ENCODE measurements at regions of chr4 and their contacts with region 1.

Region 1: DNA sequence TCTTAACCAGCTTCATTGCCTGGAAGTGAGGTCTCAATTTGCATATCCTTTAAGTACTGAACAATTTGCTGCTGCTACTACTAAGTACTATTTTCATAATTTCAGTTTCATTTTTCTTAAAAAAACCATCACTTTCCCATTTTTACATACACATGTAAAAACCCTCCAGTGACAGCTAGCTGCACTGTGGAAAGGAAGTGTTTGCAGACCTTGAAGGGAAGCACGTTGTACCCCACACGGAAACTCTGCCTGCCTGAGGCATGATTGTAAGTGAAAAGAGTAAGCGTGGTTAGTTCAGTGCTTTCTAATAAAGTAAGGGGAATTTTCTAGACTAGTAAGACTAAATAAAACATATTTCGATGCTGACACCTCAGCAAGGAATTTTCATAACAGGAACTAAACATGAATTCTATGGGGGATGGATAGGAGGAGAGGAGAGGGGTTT is 103.6 kb downstream of the RAPGEF2 start:
- DNase-seq: peak; percentile 84
- H3K4me3 Mint-ChIP-seq: peak overlapping the region; percentile 44
- H3K27ac Mint-ChIP-seq: peak overlapping the region; percentile 97
- H3K4me1 Mint-ChIP-seq: peaks cover 54% of the 10 kb centered on the region
- H3K27me3 Mint-ChIP-seq: no peaks in the 10 kb centered on the region

Region 2: DNA sequence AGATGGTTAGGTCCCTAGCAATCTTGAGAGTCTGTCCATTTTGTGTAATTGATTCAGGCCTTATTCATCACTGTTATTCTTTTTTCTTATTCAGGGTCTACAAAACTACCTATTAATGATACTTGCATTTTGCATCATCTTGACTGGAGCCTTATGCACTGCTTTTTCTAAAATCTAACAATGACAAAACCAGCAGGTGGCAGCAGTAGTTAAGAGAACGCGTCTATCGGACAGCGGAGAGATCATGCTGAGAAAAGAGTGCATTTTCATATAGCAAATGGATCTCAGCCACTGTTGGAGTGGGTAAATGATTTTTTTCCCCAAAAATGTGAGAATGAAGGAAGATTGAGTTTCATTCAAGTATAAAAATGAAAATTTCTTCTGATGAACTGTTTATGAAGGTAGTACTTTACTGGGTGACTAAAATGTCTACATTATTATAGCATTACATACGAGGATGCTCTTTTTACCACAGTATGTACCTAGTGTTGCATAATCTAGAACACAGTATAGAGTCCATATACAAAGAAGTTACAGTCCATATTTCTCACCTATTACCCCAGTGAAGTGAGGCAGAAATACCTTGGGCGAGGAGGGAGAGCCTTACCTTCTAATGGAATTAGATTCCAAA is 953.0 kb before region 1 on chr4:
- CTCF ChIA-PET with region 1: no interaction called
- intact Hi-C with region 1: loop called (anchors 2 kb)
- DNase-seq: peak; percentile 76
- H3K4me3 Mint-ChIP-seq: no peak overlapping the region
- H3K27ac Mint-ChIP-seq: no peak overlapping the region
- H3K4me1 Mint-ChIP-seq: peaks cover 7% of the 10 kb centered on the region
- H3K27me3 Mint-ChIP-seq: peaks cover 18% of the 10 kb centered on the region

Region 3: GRCh38 chr4:158722917-158723793 is 483.3 kb before region 1 on chr4 and contains the start of gene PPID:
- CTCF ChIA-PET with region 1: interaction called, 11 read pairs
- intact Hi-C with region 1: loop called (anchors 1 kb)
- DNase-seq: peak; percentile 88
- H3K4me3 Mint-ChIP-seq: peak within 1 kb of the TSS; percentile 98
- H3K27ac Mint-ChIP-seq: peak within 1 kb of the TSS; percentile 99
- H3K4me1 Mint-ChIP-seq: peaks cover 41% of the 10 kb centered on the region
- H3K27me3 Mint-ChIP-seq: no peaks in the 10 kb centered on the region
- total RNA-seq, gene PPID: 55.4 to 55.6 TPM

Region 4: DNA sequence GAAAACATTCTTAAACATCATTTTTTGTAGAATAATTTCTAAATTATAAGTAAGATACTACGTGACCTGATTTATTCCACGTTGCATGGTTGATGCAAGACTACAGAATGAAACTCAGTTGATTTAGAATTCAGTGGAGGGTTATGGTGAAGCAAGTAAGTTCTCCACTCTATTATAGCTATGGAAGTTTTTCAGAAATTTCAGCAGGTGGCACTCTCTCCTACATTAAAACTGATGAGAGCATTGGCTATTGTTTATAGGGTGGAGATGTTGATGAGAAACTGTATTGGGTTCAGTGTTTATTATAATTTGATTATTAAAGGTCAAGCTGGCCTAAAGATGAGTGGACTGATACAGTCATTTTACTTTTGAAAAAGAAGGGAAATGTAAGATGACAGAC is 349.6 kb before region 1 on chr4:
- CTCF ChIA-PET with region 1: interaction called, 26 read pairs
- intact Hi-C with region 1: loop called (anchors 1 kb)
- DNase-seq: no peak
- H3K4me3 Mint-ChIP-seq: no peak overlapping the region
- H3K27ac Mint-ChIP-seq: no peak overlapping the region
- H3K4me1 Mint-ChIP-seq: no peaks in the 10 kb centered on the region
- H3K27me3 Mint-ChIP-seq: no peaks in the 10 kb centered on the region

Region 5: GRCh38 chr4:159169404-159170302 is 36.8 kb before region 1 on chr4:
- CTCF ChIA-PET with region 1: interaction called, 11 read pairs
- intact Hi-C with region 1: no loop called
- DNase-seq: no peak
- H3K4me3 Mint-ChIP-seq: no peak overlapping the region
- H3K27ac Mint-ChIP-seq: no peak overlapping the region
- H3K4me1 Mint-ChIP-seq: peaks cover 68% of the 10 kb centered on the region
- H3K27me3 Mint-ChIP-seq: no peaks in the 10 kb centered on the region

Region 6: GRCh38 chr4:159232465-159233106 is 26.1 kb after region 1 on chr4:
- CTCF ChIA-PET with region 1: interaction called, 8 read pairs
- intact Hi-C with region 1: loop called (anchors 1 kb)
- DNase-seq: no peak
- H3K4me3 Mint-ChIP-seq: no peak overlapping the region
- H3K27ac Mint-ChIP-seq: no peak overlapping the region
- H3K4me1 Mint-ChIP-seq: peaks cover 22% of the 10 kb centered on the region
- H3K27me3 Mint-ChIP-seq: no peaks in the 10 kb centered on the region

Region 7: GRCh38 chr4:159281771-159282170 is 75.3 kb after region 1 on chr4:
- CTCF ChIA-PET with region 1: no interaction called
- intact Hi-C with region 1: no loop called
- DNase-seq: no peak
- H3K4me3 Mint-ChIP-seq: no peak overlapping the region
- H3K27ac Mint-ChIP-seq: no peak overlapping the region
- H3K4me1 Mint-ChIP-seq: no peaks in the 10 kb centered on the region
- H3K27me3 Mint-ChIP-seq: no peaks in the 10 kb centered on the region